Esophagus squamous epithelium (tissue), 5 donors: ENCODE measurements at regions of chr5 and their contacts with region 1.

Region 1: DNA sequence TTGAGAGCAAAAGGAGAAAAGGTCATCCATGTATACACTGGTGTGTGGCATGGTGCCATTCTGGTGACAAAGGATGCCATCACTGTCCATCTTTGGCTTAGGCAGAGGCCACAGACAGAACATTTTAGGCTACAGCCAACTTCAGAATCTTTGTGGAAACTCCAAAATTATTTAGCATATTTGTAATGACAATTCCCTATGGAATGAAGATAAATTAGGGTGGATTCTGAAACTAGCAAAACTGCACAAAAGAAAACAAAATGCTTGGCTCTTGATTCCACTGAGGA is 92.5 kb downstream of the FBXW11 start:
- DNase-seq: no peak
- H3K4me3 ChIP-seq: no peak overlapping the region
- H3K27ac ChIP-seq: no peak overlapping the region
- H3K4me1 ChIP-seq: peaks cover 0 to 43% (median 0%) of the 10 kb centered on the region in 3 donors
- H3K27me3 ChIP-seq: no peaks in the 10 kb centered on the region
- CTCF ChIP-seq: no peak
- POLR2A ChIP-seq: no peak

Region 2: GRCh38 chr5:172044631-172045314 is 130.8 kb after region 1 on chr5:
- intact Hi-C with region 1: loop called (anchors 5 kb)
- DNase-seq: no peak
- H3K4me3 ChIP-seq: no peak overlapping the region
- H3K27ac ChIP-seq: no peak overlapping the region
- H3K4me1 ChIP-seq: peaks cover 0 to 7% (median 0%) of the 10 kb centered on the region in 3 donors
- H3K27me3 ChIP-seq: no peaks in the 10 kb centered on the region
- CTCF ChIP-seq: no peak
- POLR2A ChIP-seq: no peak

Region 3: DNA sequence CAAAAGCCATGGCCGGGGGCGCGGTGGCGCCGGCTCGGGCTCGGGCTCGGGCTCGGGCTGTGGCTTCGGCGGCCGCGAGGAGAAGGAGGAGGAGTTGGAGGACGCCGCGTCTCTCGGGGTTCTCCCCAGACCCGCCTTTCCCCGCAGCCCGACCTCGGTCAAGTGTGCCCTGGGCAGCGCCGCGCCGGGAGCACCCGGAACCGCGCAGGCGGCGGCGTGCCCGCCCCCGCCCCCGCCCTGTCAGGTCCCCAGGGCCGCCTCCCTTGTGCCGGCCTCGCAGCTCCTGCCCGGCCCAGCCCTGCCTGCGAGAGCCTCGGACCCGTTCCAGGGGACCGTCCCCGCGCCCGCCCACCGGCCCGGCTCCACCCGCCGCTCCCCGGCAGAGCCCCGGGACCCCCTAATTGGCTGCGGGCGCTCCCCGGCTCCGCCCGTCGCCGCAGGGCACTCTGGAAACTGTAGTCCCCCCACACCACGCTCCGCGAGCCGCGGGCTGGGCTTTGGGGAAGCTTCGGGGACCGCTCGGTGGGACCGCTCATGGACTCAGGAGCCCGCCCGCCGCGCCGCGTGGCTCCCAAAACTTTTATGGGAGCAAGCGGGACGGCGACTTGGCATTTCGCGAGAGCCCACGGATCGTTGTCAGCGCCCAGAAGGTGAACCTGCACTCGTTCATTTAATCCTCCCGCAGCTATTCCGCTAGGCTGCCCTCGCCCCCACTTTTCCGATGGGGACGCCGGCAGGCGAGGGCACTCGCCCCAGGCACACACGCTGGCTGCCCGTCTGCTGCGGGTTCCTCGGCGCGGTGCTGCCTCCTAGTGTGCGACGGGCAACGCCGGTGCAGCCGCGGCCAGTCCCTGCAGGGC is 274.3 kb after region 1 on chr5 and contains the start of gene STK10:
- intact Hi-C with region 1: no loop called
- DNase-seq: peak; percentile 69
- H3K4me3 ChIP-seq: peak within 1 kb of the TSS; percentile 48 to 87 (median 72)
- H3K27ac ChIP-seq: peak within 1 kb of the TSS; percentile 83 to 92 (median 90)
- H3K4me1 ChIP-seq: peaks cover 22 to 52% (median 22%) of the 10 kb centered on the region in 3 donors
- H3K27me3 ChIP-seq: peaks cover 0 to 16% (median 0%) of the 10 kb centered on the region in 4 donors
- CTCF ChIP-seq: peak; percentile 80 to 94 (median 86)
- POLR2A ChIP-seq: peak in 2 of 4 donors; percentile 68 to 71
- total RNA-seq, gene STK10: 5.4 to 15.6 (median 8.9) TPM